OCI-LY7 (cell line): ENCODE measurements at regions of chr1 and their contacts with region 1.

Region 1: DNA sequence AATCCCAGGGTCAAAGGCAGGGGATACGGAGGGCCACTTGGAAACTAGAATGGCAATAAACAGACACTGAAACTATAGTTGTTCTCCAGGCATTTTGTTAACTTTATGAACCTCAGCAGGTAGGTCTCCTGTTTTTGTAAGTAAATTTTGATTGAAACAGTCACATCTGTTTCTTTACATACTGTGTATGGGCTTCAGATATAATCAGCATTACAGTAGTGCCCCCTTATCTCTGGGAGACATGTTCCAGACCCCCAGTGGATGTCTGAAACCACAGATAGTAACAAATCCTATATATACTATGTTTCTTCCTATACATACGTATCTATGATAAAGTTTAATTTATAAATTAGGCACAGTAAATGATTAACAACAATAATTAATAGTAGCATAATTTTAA is 11.5 kb downstream of the STIL start:
- DNase-seq: no peak
- H3K4me3 ChIP-seq: no peak overlapping the region
- H3K27ac ChIP-seq: no peak overlapping the region
- H3K4me1 ChIP-seq: no peaks in the 10 kb centered on the region
- CTCF ChIP-seq: no peak

Region 2: DNA sequence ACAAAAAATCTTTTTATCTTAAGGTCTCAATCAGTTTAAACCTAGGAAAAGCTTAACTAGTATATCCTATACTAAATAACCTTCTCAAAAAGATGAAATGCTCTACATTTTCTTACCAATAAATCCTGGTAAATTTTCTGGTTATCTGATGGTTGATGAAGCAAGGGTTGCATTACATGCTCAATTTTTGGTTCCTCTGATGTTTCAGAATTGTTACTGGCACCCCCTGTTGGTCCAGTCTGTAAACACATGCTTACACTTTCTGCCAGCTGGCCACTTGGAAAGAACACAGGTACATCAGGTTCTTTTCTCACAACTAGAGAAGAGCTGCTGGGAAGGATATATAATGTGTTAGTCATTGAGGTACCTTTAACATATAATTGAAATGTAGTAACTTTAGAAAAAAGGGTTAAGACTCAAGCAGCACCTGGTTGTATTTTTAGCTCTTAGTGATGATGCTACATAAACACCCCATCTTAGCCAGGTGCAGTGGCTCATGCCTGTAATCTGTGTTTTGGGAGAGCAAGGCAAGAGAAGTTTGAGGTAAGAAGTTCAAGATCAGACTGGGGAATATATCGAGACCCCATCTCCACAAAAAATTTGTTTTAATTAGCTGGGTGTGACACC is 39.6 kb before region 1 on chr1:
- CTCF ChIA-PET with region 1: no interaction called
- POLR2A ChIA-PET with region 1: no interaction called
- intact Hi-C with region 1: loop called (anchors 5 kb)
- DNase-seq: peak; percentile 53
- H3K4me3 ChIP-seq: no peak overlapping the region
- H3K27ac ChIP-seq: no peak overlapping the region
- H3K4me1 ChIP-seq: no peaks in the 10 kb centered on the region
- CTCF ChIP-seq: peak; percentile 89